ENCODE measurements at regions of chr6 and their contacts with region 1.

Region 1: GRCh38 chr6:1335367-1336037 is 23.6 kb downstream of the FOXQ1 start:
- DNase-seq: peak; percentile 43 to 63
- H3K4me3 ChIP-seq: no peak overlapping the region
- H3K27ac ChIP-seq: peak overlapping the region in 2 of 3 donors; percentile 14 to 47
- H3K4me1 ChIP-seq: peaks cover 13 to 16% of the 10 kb centered on the region in 2 donors
- H3K27me3 ChIP-seq: no peaks in the 10 kb centered on the region
- CTCF ChIP-seq: no peak
- POLR2A ChIP-seq: no peak

Region 2: GRCh38 chr6:797479-798077 is 537.9 kb before region 1 on chr6:
- intact Hi-C with region 1: loop called (anchors 5 kb)
- DNase-seq: peak; percentile 54 to 56
- H3K4me3 ChIP-seq: no peak overlapping the region
- H3K27ac ChIP-seq: no peak overlapping the region
- H3K4me1 ChIP-seq: no peaks in the 10 kb centered on the region
- H3K27me3 ChIP-seq: peaks cover under 1% of the 10 kb centered on the region
- CTCF ChIP-seq: peak; percentile 49 to 92 (median 74)
- POLR2A ChIP-seq: no peak